ENCODE measurements at regions of chr18 and their contacts with region 1.

Region 1: DNA sequence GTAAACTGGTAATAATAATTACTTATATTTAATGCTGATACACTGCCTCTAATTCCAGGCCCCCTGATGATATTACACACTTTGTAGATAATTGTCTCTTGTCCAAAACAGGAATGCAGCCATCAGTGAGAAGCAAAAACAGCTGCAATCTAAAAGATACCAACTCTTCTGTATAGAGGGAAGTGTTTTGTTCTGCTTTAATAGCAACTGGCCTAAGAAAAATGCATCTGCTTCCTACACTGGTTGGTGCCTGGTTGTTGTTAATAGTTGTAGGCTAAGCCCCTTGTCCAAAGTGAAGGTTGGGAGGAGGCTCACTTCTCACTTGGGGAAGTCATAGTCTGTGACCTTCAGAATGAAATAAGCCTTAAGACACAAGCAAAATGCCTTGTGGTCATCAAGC is 332.0 kb downstream of the ZNF521 start:
- DNase-seq: no peak
- ATAC-seq: no peak
- H3K4me3 ChIP-seq: no peak overlapping the region
- H3K4me3 Mint-ChIP-seq: no peak overlapping the region
- H3K27ac ChIP-seq: no peak overlapping the region
- H3K27ac Mint-ChIP-seq: no peak overlapping the region
- H3K4me1 ChIP-seq: no peaks in the 10 kb centered on the region
- H3K4me1 Mint-ChIP-seq: no peaks in the 10 kb centered on the region
- H3K27me3 ChIP-seq: no peaks in the 10 kb centered on the region
- H3K27me3 Mint-ChIP-seq: peaks cover 0 to 37% of the 10 kb centered on the region in 2 donors
- CTCF ChIP-seq: no peak

Region 2: DNA sequence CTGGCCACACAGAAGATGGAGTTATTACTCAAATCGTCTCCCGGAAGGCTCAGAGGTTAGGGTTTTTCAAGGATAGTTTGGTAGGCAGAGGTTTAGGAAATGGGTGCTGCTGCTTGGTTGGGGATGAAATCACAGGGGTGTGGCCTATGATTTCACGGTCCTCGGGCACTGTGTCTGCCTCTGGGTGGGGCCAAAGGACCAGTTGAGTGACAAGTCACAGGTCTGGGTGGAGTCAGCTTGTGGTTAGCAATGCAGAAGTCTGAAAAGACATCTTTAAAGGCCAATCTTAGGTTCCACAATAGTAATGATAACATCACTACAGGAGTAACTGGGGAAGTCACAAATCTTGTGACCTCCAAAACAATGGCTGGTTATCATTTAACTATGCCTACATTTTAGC is 55.7 kb before region 1 on chr18:
- intact Hi-C with region 1: loop called (anchors 10 kb)
- DNase-seq: no peak
- ATAC-seq: peak in 1 of 3 donors; percentile 48
- H3K4me3 ChIP-seq: no peak overlapping the region
- H3K4me3 Mint-ChIP-seq: no peak overlapping the region
- H3K27ac ChIP-seq: no peak overlapping the region
- H3K27ac Mint-ChIP-seq: no peak overlapping the region
- H3K4me1 ChIP-seq: no peaks in the 10 kb centered on the region
- H3K4me1 Mint-ChIP-seq: no peaks in the 10 kb centered on the region
- H3K27me3 ChIP-seq: no peaks in the 10 kb centered on the region
- H3K27me3 Mint-ChIP-seq: peaks cover 0 to 11% of the 10 kb centered on the region in 2 donors
- CTCF ChIP-seq: no peak

Region 3: GRCh38 chr18:25210622-25211021 is 190.7 kb after region 1 on chr18:
- intact Hi-C with region 1: no loop called
- DNase-seq: no peak
- ATAC-seq: no peak
- H3K4me3 ChIP-seq: no peak overlapping the region
- H3K4me3 Mint-ChIP-seq: no peak overlapping the region
- H3K27ac ChIP-seq: no peak overlapping the region
- H3K27ac Mint-ChIP-seq: no peak overlapping the region
- H3K4me1 ChIP-seq: no peaks in the 10 kb centered on the region
- H3K4me1 Mint-ChIP-seq: no peaks in the 10 kb centered on the region
- H3K27me3 ChIP-seq: no peaks in the 10 kb centered on the region
- H3K27me3 Mint-ChIP-seq: no peaks in the 10 kb centered on the region
- CTCF ChIP-seq: no peak

Region 4: DNA sequence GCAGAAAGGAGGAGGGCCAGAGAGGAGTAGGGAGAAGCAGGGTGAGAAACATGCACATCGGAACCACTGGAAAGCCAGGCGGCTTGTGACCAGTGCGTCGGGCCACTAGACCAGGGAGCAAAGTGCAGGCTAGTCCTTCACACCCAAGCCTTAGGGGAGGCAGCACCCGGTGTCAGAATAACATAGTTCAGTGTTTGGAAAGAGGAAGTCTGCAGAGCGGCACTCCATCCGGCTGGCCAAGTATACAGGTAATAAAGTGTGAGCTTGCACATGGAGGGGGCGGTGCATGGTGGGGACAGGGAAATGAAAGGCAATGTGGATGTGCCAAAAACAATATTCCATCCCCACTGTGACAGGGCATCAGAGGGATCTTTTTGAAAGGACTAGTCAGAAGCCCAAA is 262.4 kb after region 1 on chr18:
- intact Hi-C with region 1: no loop called
- DNase-seq: no peak
- ATAC-seq: no peak
- H3K4me3 ChIP-seq: no peak overlapping the region
- H3K4me3 Mint-ChIP-seq: no peak overlapping the region
- H3K27ac ChIP-seq: no peak overlapping the region
- H3K27ac Mint-ChIP-seq: no peak overlapping the region
- H3K4me1 ChIP-seq: peaks cover 2% of the 10 kb centered on the region
- H3K4me1 Mint-ChIP-seq: no peaks in the 10 kb centered on the region
- H3K27me3 ChIP-seq: peaks cover 3% of the 10 kb centered on the region
- H3K27me3 Mint-ChIP-seq: peaks cover 5 to 25% of the 10 kb centered on the region in 2 donors
- CTCF ChIP-seq: no peak